H1 (cell line): ENCODE measurements at regions of chr1 and their contacts with region 1.

Region 1: GRCh38 chr1:93764042-93764750 is 82.6 kb upstream of the BCAR3 start:
- DNase-seq: no peak
- H3K4me3 ChIP-seq: no peak overlapping the region
- H3K27ac ChIP-seq: no peak overlapping the region
- H3K4me1 ChIP-seq: peaks cover 5 to 9% (median 7%) of the 10 kb centered on the region in 4 experiments
- H3K27me3 ChIP-seq: no peaks in the 10 kb centered on the region
- CTCF ChIP-seq: no peak
- EP300 ChIP-seq: no peak
- POLR2A ChIP-seq: no peak
- RAD21 ChIP-seq: no peak

Region 2: DNA sequence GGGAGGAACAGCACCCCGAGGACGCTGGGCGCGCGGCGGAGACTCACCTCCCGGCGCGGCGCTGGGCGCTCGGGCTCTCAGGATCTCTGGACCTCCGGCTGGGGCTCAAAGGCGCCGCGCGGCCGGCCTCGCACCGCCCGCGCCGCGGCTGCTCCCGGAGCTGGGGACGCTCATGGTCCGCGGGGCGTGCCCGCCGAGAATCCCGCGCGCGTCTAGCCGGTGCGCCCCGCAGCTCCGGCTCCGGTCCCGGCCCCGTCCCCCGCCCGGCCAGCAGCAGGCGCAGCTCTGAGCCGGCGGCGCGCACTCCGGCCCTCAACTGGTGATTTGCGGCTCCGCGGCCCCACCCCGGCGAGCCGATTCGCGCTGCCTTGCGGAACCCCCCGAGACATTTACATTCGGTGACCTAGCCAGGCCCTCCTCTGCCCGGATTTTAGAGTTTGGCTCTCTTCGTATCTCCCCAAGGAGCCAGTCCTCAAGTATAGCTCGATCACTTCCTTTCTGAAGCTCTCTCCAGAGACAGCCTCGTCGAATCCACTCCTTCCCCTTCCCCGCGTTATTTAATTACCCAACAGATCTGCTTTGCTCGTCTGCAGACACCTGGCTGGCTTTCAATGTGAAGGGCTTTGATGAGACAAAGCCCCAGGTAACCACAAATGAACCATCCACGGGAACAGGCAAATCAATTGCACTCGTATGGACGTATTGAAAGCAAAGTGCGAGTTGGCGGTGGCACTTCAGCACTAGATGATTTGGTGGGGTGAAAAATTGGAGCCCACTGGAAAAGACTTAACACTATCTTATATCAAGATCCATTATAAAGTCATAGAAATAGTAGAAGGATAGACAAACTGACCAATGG is 82.4 kb before region 1 on chr1 and contains the start of gene BCAR3:
- CTCF ChIA-PET with region 1: no interaction called
- POLR2A ChIA-PET with region 1: no interaction called
- DNase-seq: peak; percentile 38 to 83
- H3K4me3 ChIP-seq: peak within 1 kb of the TSS; percentile 64 to 87 (median 70)
- H3K27ac ChIP-seq: no peak within 1 kb of the TSS
- H3K4me1 ChIP-seq: peaks cover 3 to 10% (median 4%) of the 10 kb centered on the region in 4 experiments; a peak in 6 of 7 replicates
- H3K27me3 ChIP-seq: peaks cover 0 to 8% (median 2%) of the 10 kb centered on the region in 4 experiments; a peak in 4 of 7 replicates
- CTCF ChIP-seq: peak; percentile 22 to 46 (median 31)
- EP300 ChIP-seq: no peak
- POLR2A ChIP-seq: no peak; a peak in 1 of 3 replicates
- RAD21 ChIP-seq: peak in 1 of 2 experiments; percentile 39; a peak in 2 of 4 replicates
- total RNA-seq, gene BCAR3: 8.3 and 9.2 TPM in 2 replicates

Region 3: DNA sequence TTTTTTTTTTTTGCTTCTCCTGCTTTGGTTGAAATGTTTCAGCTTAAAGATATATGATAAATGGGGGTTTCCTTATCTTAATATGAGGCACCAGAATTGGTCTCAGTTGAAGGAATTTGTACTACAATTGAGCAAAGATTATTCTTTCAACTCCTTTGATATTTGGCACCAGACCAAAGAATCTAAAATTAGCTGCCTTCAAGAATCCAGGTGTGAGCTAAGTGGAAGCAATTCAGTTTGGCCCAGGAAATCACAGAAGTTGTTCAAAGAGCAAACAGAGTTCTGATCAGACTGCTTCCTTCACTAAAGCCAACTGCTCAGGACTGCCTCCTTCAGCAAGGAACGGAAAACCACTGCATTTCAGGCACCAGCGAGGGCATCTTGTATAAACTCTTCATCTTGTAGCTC is 14.3 kb before region 1 on chr1:
- CTCF ChIA-PET with region 1: interaction called, 18 read pairs
- POLR2A ChIA-PET with region 1: no interaction called
- DNase-seq: peak in 1 of 2 experiments; percentile 25
- H3K4me3 ChIP-seq: no peak overlapping the region
- H3K27ac ChIP-seq: no peak overlapping the region
- H3K4me1 ChIP-seq: no peaks in the 10 kb centered on the region
- H3K27me3 ChIP-seq: no peaks in the 10 kb centered on the region; a peak in 1 of 7 replicates
- CTCF ChIP-seq: peak; percentile 41 to 73 (median 56)
- EP300 ChIP-seq: no peak
- POLR2A ChIP-seq: no peak
- RAD21 ChIP-seq: peak; percentile 43 to 66; a peak in 3 of 4 replicates

Region 4: GRCh38 chr1:93822739-93823425 is 58.7 kb after region 1 on chr1:
- CTCF ChIA-PET with region 1: no interaction called
- POLR2A ChIA-PET with region 1: no interaction called
- DNase-seq: no peak
- H3K4me3 ChIP-seq: no peak overlapping the region
- H3K27ac ChIP-seq: no peak overlapping the region
- H3K4me1 ChIP-seq: peaks cover 2 to 16% (median 10%) of the 10 kb centered on the region in 4 experiments; a peak in 6 of 7 replicates
- H3K27me3 ChIP-seq: no peaks in the 10 kb centered on the region
- CTCF ChIP-seq: no peak
- EP300 ChIP-seq: no peak
- POLR2A ChIP-seq: no peak
- RAD21 ChIP-seq: no peak